ENCODE measurements at regions of chr11 and their contacts with region 1.

Region 1: GRCh38 chr11:57567515-57568329 is at the start of gene UBE2L6:
- DNase-seq: peak; percentile 80
- ATAC-seq: peak; percentile 70
- H3K4me3 Mint-ChIP-seq: peak within 1 kb of the TSS; percentile 99
- H3K27ac Mint-ChIP-seq: peak within 1 kb of the TSS; percentile 97
- H3K4me1 Mint-ChIP-seq: peaks cover 40% of the 10 kb centered on the region
- H3K27me3 Mint-ChIP-seq: no peaks in the 10 kb centered on the region
- CTCF ChIP-seq: peak; percentile 41
- total RNA-seq, gene UBE2L6: 63.4 and 69.2 TPM in 2 replicates

Region 2: DNA sequence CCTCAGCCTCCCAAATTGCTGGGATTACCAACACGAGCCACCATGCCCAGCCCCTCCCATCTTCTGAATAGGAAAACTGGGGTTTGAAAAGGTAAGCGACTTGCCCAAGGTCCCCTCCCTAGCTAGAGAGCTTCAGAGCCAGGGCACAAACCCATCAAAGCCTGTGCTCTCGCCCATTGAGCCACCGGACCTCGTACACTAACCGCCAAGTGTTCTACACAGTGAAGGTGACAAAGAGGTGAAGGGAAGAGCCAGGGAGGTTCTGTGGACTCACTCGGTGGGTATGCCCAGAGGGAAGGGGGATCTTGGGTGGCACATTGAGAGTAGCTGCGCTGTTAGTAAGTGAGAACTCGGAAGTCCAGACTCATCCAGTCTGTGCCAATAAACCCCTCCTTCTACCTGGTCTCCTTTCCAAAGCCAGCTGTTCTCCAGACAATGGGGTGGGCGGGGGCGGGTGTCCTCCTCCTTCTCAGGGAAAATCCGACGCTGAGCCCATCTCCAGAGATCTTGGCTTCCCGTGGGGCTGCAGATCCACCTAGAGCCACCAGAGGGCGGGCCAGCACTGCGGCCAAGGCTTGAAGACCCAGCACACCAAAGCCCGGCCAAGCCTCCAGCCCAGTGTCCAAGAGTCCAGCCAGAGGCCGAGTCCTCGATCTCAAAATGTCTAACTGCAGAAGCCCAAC is 110.6 kb before region 1 on chr11:
- CTCF ChIA-PET with region 1: interaction called, 11 read pairs
- POLR2A ChIA-PET with region 1: no interaction called
- intact Hi-C with region 1: loop called (anchors 1 kb)
- DNase-seq: peak; percentile 76
- ATAC-seq: peak; percentile 76
- H3K4me3 Mint-ChIP-seq: peak overlapping the region; percentile 70
- H3K27ac Mint-ChIP-seq: no peak overlapping the region
- H3K4me1 Mint-ChIP-seq: peaks cover 28% of the 10 kb centered on the region
- H3K27me3 Mint-ChIP-seq: peaks cover 28% of the 10 kb centered on the region
- CTCF ChIP-seq: peak; percentile 93

Region 3: DNA sequence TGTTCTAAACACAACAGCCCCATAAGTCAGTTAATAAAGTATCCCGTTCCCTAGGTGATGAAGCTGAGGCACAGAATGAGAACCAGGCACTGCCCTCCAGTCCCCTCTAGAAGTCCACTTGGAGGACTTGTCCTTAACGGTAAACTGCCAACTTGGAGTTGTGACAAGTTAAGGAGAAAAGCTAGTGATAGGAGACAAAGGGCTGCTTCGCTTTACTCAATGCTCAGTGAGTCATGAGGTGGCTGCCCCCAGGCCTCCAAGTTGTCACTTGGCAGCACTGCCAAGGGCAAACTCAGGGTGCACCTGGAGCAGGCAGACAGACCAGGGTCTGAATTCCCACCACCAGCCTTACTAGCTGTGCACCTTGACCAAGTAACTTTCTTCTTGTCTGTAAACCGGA is 65.8 kb before region 1 on chr11:
- CTCF ChIA-PET with region 1: no interaction called
- POLR2A ChIA-PET with region 1: no interaction called
- intact Hi-C with region 1: no loop called
- DNase-seq: no peak
- ATAC-seq: no peak
- H3K4me3 Mint-ChIP-seq: no peak overlapping the region
- H3K27ac Mint-ChIP-seq: no peak overlapping the region
- H3K4me1 Mint-ChIP-seq: peaks cover 6% of the 10 kb centered on the region
- H3K27me3 Mint-ChIP-seq: no peaks in the 10 kb centered on the region
- CTCF ChIP-seq: no peak

Region 4: GRCh38 chr11:57552479-57552878 is 15.2 kb before region 1 on chr11:
- CTCF ChIA-PET with region 1: interaction called, 7 read pairs
- POLR2A ChIA-PET with region 1: interaction called, 11 read pairs
- intact Hi-C with region 1: loop called (anchors 2 kb)
- DNase-seq: no peak
- ATAC-seq: no peak
- H3K4me3 Mint-ChIP-seq: no peak overlapping the region
- H3K27ac Mint-ChIP-seq: no peak overlapping the region
- H3K4me1 Mint-ChIP-seq: peaks cover 11% of the 10 kb centered on the region
- H3K27me3 Mint-ChIP-seq: no peaks in the 10 kb centered on the region
- CTCF ChIP-seq: no peak

Region 5: GRCh38 chr11:57712256-57713150 is 144.8 kb after region 1 on chr11 and contains the start of gene TMX2:
- CTCF ChIA-PET with region 1: no interaction called
- POLR2A ChIA-PET with region 1: no interaction called
- intact Hi-C with region 1: loop called (anchors 1 kb)
- DNase-seq: peak; percentile 75
- ATAC-seq: peak; percentile 87
- H3K4me3 Mint-ChIP-seq: peak within 1 kb of the TSS; percentile 98
- H3K27ac Mint-ChIP-seq: peak within 1 kb of the TSS; percentile 96
- H3K4me1 Mint-ChIP-seq: peaks cover 47% of the 10 kb centered on the region
- H3K27me3 Mint-ChIP-seq: no peaks in the 10 kb centered on the region
- CTCF ChIP-seq: no peak
- total RNA-seq, gene TMX2: 53.2 and 53.3 TPM in 2 replicates

Region 6: DNA sequence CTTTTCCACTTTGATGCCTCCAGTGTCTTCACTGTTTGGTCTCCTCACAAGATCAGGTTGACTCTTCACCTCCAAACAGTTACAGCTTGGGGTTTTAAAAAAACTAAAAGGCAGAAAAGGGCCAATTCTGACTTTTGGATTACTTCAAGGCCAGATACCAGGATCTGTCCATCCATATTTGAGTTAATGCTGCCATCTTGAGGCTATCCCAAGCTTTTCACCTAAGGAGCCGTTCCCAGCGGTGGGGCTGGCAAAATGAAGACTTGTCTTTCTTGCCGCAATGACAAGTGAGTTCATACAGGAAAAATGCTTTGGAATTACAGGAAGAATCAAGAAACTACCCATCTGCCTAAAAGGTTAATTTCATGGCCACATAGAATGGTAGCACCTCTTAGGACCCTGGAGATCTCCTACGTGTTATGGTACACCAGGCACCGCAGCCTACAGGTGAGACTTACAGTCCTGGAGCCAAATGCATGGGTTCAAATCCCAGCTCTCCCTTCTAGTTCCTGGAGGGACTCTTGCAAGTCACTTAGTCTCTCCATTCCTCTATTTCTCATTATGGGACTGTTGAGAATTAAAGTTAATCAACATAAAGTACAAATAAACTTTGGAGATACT is 946.1 kb after region 1 on chr11:
- CTCF ChIA-PET with region 1: no interaction called
- POLR2A ChIA-PET with region 1: no interaction called
- intact Hi-C with region 1: loop called (anchors 2 kb)
- DNase-seq: no peak
- ATAC-seq: no peak
- H3K4me3 Mint-ChIP-seq: no peak overlapping the region
- H3K27ac Mint-ChIP-seq: no peak overlapping the region
- H3K4me1 Mint-ChIP-seq: no peaks in the 10 kb centered on the region
- H3K27me3 Mint-ChIP-seq: no peaks in the 10 kb centered on the region
- CTCF ChIP-seq: no peak

Region 7: GRCh38 chr11:59158206-59159068 is 1590.7 kb after region 1 on chr11:
- CTCF ChIA-PET with region 1: no interaction called
- POLR2A ChIA-PET with region 1: no interaction called
- intact Hi-C with region 1: loop called (anchors 10 kb)
- DNase-seq: no peak
- ATAC-seq: peak; percentile 99
- H3K4me3 Mint-ChIP-seq: peak overlapping the region; percentile 55
- H3K27ac Mint-ChIP-seq: peak overlapping the region; percentile 77
- H3K4me1 Mint-ChIP-seq: peaks cover 27% of the 10 kb centered on the region
- H3K27me3 Mint-ChIP-seq: no peaks in the 10 kb centered on the region
- CTCF ChIP-seq: no peak

Measured in activated B cell treated with CpG ODN at 0.5 μM for 24 hours (primary cell).